OCI-LY7 (cell line): ENCODE measurements at regions of chr4 and their contacts with region 1.

Region 1: DNA sequence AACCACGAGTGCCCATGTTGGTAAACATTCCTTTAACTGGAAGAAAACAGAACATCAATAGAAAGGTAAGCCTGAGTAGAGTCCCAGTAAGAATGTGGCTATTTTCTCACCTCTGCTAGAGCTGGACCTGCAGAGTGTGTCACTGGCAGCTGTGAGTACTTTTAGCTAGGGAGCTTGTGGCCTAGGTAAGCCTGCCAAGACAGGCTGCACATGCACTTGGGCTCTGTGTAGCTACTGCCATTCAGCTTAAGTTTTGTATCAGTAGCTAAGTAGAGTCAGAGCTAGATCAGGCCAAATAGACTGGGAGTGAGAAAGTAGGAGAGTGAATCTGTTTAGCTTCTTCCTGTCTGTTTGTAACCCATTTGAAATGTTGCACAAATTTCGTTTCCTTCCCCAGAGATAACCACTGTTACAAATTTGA is 35.3 kb downstream of the RBPJ start:
- DNase-seq: peak; percentile 13
- H3K4me3 ChIP-seq: no peak overlapping the region
- H3K27ac ChIP-seq: no peak overlapping the region
- H3K4me1 ChIP-seq: peaks cover 11% of the 10 kb centered on the region
- CTCF ChIP-seq: no peak

Region 2: DNA sequence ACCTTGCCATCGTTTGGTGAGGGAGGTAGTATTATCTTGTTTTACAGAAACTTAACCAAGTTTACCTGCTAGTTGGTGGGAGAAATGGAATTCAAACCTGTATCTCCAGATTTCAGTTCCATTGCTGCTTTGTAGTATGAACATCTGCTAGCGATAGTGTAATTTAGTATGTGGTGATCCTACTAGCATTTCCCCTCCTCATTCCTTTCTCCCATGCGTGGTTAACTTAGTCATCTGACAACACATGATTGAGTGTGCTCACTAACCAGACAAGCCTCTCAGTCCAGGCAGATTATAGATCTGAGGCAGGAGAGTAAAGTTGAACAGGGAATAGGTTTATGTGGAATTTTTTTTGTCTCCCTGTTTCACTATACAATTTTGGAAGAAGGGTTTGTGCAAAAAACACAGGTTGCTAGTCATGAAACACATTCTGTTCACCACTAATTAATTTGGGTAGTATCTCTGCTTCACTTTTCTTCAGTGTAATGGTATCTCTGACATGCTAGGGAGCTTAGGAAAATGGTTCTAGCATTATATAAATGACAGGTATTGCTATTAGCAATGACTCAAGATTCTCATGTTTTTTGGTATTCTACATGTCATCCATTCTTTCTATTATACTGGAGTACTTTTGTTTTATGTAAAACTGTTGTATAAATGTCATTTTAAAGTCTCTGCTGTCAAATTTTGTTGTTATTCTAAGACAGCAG is 13.6 kb before region 1 on chr4:
- CTCF ChIA-PET with region 1: no interaction called
- POLR2A ChIA-PET with region 1: interaction called, 13 read pairs
- intact Hi-C with region 1: no loop called
- DNase-seq: no peak
- H3K4me3 ChIP-seq: no peak overlapping the region
- H3K27ac ChIP-seq: no peak overlapping the region
- H3K4me1 ChIP-seq: peaks cover 12% of the 10 kb centered on the region
- CTCF ChIP-seq: no peak

Region 3: GRCh38 chr4:26372525-26373172 is 16.6 kb after region 1 on chr4:
- CTCF ChIA-PET with region 1: no interaction called
- POLR2A ChIA-PET with region 1: interaction called, 10 read pairs
- intact Hi-C with region 1: no loop called
- DNase-seq: peak; percentile 80
- H3K4me3 ChIP-seq: no peak overlapping the region
- H3K27ac ChIP-seq: peak overlapping the region; percentile 14
- H3K4me1 ChIP-seq: peaks cover 23% of the 10 kb centered on the region
- CTCF ChIP-seq: no peak